Tibial artery (tissue), 4 donors: ENCODE measurements at regions of chr15 and their contacts with region 1.

Region 1: GRCh38 chr15:101277038-101277882 is at the start of gene SELENOS:
- DNase-seq: peak; percentile 90 to 94
- H3K4me3 ChIP-seq: peak within 1 kb of the TSS; percentile 84 to 97
- H3K27ac ChIP-seq: peak within 1 kb of the TSS; percentile 84 to 92
- H3K4me1 ChIP-seq: peaks cover 0 to 23% (median 18%) of the 10 kb centered on the region in 4 donors
- H3K27me3 ChIP-seq: no peaks in the 10 kb centered on the region
- CTCF ChIP-seq: no peak

Region 2: DNA sequence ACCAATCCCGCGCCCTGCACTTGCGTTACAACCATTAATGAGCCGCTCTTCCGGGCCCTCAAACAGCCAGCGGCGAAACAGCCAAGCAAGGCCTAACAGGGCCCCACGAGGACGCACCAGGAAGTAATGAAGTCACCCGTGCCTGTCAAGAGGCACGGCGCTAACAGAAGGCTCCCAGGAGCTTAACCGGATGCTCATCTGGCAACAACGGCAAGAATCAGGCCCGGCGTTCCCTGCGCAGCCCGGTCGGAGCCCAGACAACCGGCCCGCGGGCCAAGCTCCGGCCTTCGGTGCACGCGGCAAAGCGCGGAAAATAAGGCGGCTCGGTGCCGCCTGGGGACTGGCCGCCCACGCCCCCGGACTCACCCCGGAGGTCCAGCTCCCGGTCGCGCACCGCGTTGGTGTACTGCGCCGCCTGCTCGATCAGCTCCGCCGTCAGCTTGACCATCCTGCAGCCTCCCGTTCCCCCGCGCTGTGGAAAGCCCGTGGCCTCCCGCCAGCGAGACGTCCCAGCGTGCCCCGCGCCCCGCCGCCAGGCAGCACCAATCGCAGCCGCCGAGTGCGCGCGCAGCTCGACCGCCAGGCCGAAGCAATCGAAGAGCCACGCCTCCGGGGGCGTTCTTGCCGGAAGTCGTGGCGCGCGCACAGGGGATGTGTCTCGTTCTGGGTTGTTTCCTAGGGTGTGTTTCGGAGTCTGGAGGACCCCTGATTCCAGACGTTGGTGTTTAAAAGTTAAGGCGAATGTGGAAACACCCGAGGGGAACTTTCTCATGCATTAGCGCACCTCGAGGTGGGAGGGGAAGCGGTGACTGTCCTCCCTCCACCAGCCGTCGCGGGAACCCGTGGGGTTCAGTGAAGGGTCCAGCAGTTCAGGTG is 17.7 kb after region 1 on chr15 and contains the start of gene SNRPA1:
- intact Hi-C with region 1: loop called (anchors 2 kb)
- DNase-seq: peak; percentile 98 to 99
- H3K4me3 ChIP-seq: peak within 1 kb of the TSS; percentile 79 to 97
- H3K27ac ChIP-seq: peak within 1 kb of the TSS; percentile 90 to 95
- H3K4me1 ChIP-seq: peaks cover 0 to 27% (median 22%) of the 10 kb centered on the region in 4 donors
- H3K27me3 ChIP-seq: no peaks in the 10 kb centered on the region
- CTCF ChIP-seq: no peak